ENCODE measurements at regions of chr4 and their contacts with region 1.

Region 1: GRCh38 chr4:52028969-52029368 is 8.8 kb upstream of the LRRC66 start:
- DNase-seq: no peak
- ATAC-seq: no peak
- H3K4me3 ChIP-seq: no peak overlapping the region
- H3K27ac ChIP-seq: no peak overlapping the region
- H3K4me1 ChIP-seq: no peaks in the 10 kb centered on the region
- H3K27me3 ChIP-seq: no peaks in the 10 kb centered on the region
- CTCF ChIP-seq: no peak

Region 2: GRCh38 chr4:51885363-51885762 is 143.6 kb before region 1 on chr4:
- intact Hi-C with region 1: loop called in 2 of 3 experiments (anchors 10 kb)
- DNase-seq: no peak
- ATAC-seq: peak in 3 of 4 donors; percentile 62 to 74 (median 64)
- H3K4me3 ChIP-seq: no peak overlapping the region
- H3K27ac ChIP-seq: no peak overlapping the region
- H3K4me1 ChIP-seq: peaks cover 0 to 4% (median 0%) of the 10 kb centered on the region in 3 donors
- H3K27me3 ChIP-seq: no peaks in the 10 kb centered on the region
- CTCF ChIP-seq: peak in 1 of 4 donors; percentile 9

Region 3: GRCh38 chr4:51895813-51896408 is 133.1 kb before region 1 on chr4:
- intact Hi-C with region 1: loop called in 1 of 3 experiments (anchors 10 kb)
- DNase-seq: peak in 4 of 6 donors; percentile 36 to 59 (median 42)
- ATAC-seq: peak; percentile 85 to 98 (median 96)
- H3K4me3 ChIP-seq: no peak overlapping the region
- H3K27ac ChIP-seq: no peak overlapping the region
- H3K4me1 ChIP-seq: no peaks in the 10 kb centered on the region
- H3K27me3 ChIP-seq: no peaks in the 10 kb centered on the region
- CTCF ChIP-seq: peak; percentile 48 to 76 (median 66)